SK-N-SH (cell line): ENCODE measurements at regions of chr6 and their contacts with region 1.

Region 1: GRCh38 chr6:32885698-32886286 is 31.8 kb downstream of the PSMB9 start:
- DNase-seq: peak; percentile 50
- H3K4me3 ChIP-seq: no peak overlapping the region; a peak in 1 of 4 replicates
- H3K27ac ChIP-seq: no peak overlapping the region
- H3K4me1 ChIP-seq: peaks cover 0 to 8% of the 10 kb centered on the region in 2 experiments; a peak in 1 of 4 replicates
- H3K27me3 ChIP-seq: peaks cover 14% of the 10 kb centered on the region; the same call in 1 of the 2 replicates
- CTCF ChIP-seq: peak; percentile 78
- EP300 ChIP-seq: no peak
- RAD21 ChIP-seq: peak; percentile 85

Region 2: GRCh38 chr6:32912951-32913350 is 27.2 kb after region 1 on chr6:
- CTCF ChIA-PET with region 1: interaction called, 10 read pairs
- POLR2A ChIA-PET with region 1: no interaction called
- DNase-seq: no peak
- H3K4me3 ChIP-seq: no peak overlapping the region
- H3K27ac ChIP-seq: no peak overlapping the region
- H3K4me1 ChIP-seq: no peaks in the 10 kb centered on the region
- H3K27me3 ChIP-seq: no peaks in the 10 kb centered on the region; the same call in 1 of the 2 replicates
- CTCF ChIP-seq: no peak
- EP300 ChIP-seq: no peak
- RAD21 ChIP-seq: no peak

Region 3: GRCh38 chr6:32940656-32941213 is 54.9 kb after region 1 on chr6 and contains the start of gene HLA-DMB:
- CTCF ChIA-PET with region 1: interaction called, 10 read pairs
- POLR2A ChIA-PET with region 1: no interaction called
- DNase-seq: peak; percentile 53
- H3K4me3 ChIP-seq: peak within 1 kb of the TSS; percentile 36 to 42; a peak in 3 of 4 replicates
- H3K27ac ChIP-seq: no peak within 1 kb of the TSS
- H3K4me1 ChIP-seq: peaks cover 0 to 3% of the 10 kb centered on the region in 2 experiments; a peak in 1 of 4 replicates
- H3K27me3 ChIP-seq: peaks cover 51% of the 10 kb centered on the region; the same call in 1 of the 2 replicates
- CTCF ChIP-seq: no peak
- EP300 ChIP-seq: no peak
- RAD21 ChIP-seq: no peak
- polyA plus RNA-seq, gene HLA-DMB: 0.10 TPM in 1 of 2 replicates, not detected in the other

Region 4: GRCh38 chr6:32947552-32948465 is 62.0 kb after region 1 on chr6:
- CTCF ChIA-PET with region 1: interaction called, 28 read pairs
- POLR2A ChIA-PET with region 1: no interaction called
- DNase-seq: peak; percentile 21
- H3K4me3 ChIP-seq: no peak overlapping the region
- H3K27ac ChIP-seq: no peak overlapping the region
- H3K4me1 ChIP-seq: peaks cover 0 to 2% of the 10 kb centered on the region in 2 experiments; a peak in 1 of 4 replicates
- H3K27me3 ChIP-seq: peaks cover 14% of the 10 kb centered on the region; the same call in 1 of the 2 replicates
- CTCF ChIP-seq: peak; percentile 61
- EP300 ChIP-seq: no peak
- RAD21 ChIP-seq: peak; percentile 74

Region 5: DNA sequence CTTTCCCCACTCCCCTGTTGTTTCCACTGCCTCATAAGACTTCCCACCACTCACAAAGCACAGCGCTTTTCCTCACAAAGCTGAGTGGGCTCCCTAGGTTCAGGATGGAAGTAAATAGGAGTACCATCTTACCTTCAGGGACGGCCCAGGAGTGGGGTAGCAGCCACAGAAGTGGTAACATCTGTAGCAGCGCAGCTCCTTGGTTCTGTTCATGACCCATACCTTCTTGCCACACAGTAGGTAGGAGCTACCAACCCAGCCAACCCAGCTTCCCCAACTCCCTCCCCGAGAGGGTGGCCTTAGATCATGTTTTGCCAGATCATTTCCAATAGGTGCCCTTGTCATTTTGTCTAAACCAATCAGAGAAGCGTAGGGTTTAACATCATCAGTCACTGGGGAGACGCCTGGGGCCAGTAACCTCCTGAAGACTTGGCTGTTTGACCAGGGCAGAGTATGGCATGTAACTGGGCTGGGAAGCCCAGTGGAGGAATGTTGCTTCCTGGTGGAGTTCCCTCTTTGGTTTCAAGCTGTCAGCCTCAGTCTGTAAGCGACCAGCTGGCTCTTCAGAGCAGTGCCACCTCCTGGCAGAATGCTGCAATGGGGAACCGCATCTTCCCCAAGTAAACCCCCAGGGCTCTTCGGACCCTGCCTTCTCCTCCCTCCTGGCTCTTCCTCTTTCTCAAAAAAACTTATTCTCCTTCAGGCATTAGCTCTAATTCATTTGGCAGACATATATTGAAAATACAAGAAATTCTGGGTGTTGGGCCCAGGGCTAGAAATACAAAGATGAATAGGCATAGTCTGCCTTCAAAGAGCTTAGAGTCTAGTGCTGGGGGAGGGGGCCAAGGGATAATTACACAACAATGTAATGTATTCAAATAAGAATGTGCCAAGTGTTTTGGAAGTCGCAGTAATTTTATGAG is 67.3 kb after region 1 on chr6 and contains the start of gene HLA-DMA:
- CTCF ChIA-PET with region 1: interaction called, 28 read pairs
- POLR2A ChIA-PET with region 1: no interaction called
- DNase-seq: peak; percentile 42
- H3K4me3 ChIP-seq: peak within 1 kb of the TSS in 1 of 2 experiments; percentile 27; a peak in 1 of 4 replicates
- H3K27ac ChIP-seq: no peak within 1 kb of the TSS
- H3K4me1 ChIP-seq: peaks cover 0 to 6% of the 10 kb centered on the region in 2 experiments; a peak in 1 of 4 replicates
- H3K27me3 ChIP-seq: no peaks in the 10 kb centered on the region
- CTCF ChIP-seq: peak; percentile 77
- EP300 ChIP-seq: no peak
- RAD21 ChIP-seq: peak; percentile 47
- polyA plus RNA-seq, gene HLA-DMA: 1.2 and 1.5 TPM in 2 replicates

Region 6: DNA sequence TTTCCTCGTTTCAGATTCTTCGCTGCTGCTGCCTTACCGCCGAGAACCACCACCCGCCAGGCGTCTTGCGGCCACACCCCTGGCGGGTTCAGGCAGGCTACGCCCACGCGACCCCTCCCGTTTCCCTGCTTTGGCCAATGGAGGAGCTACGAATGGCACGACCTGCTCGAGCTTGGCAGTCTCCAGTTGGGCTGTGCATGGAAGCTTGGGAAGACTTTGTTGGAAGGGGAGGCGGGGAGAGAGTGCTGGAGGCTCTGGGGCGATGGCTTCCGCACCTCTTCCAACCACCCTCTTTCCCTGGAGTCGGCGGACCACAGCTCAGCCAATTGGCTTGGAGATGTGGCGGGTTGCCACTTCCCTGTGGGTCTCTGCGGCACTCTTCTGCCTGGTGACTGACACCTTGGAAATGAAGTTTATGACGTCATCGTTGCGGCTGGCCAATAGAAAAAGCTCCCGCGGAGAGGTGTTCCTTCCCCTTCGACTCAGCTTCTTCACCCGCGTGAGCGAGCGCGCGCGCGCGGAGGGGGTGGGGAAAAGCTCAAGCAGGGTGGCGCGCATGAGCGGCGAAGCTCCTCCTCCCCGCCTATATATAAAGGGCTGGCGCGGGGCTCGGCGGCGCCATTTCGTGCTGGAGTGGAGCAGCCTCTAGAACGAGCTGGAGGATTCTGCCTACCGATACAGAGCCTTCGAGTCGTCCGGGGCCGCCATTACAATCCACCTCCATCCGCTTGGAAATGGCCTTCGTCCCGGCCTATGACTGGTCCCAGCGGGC is 86.0 kb after region 1 on chr6:
- CTCF ChIA-PET with region 1: interaction called, 19 read pairs
- POLR2A ChIA-PET with region 1: interaction called, 4 read pairs
- DNase-seq: peak; percentile 92
- H3K4me3 ChIP-seq: peak overlapping the region; percentile 83 to 88
- H3K27ac ChIP-seq: peak overlapping the region; percentile 97 to 99
- H3K4me1 ChIP-seq: peaks cover 21 to 28% of the 10 kb centered on the region in 2 experiments; a peak in 3 of 4 replicates
- H3K27me3 ChIP-seq: no peaks in the 10 kb centered on the region
- CTCF ChIP-seq: no peak
- EP300 ChIP-seq: peak; percentile 7 to 55; a peak in 2 of 4 replicates
- RAD21 ChIP-seq: no peak